MCF 10A (cell line): ENCODE measurements at regions of chr12 and their contacts with region 1.

Region 1: DNA sequence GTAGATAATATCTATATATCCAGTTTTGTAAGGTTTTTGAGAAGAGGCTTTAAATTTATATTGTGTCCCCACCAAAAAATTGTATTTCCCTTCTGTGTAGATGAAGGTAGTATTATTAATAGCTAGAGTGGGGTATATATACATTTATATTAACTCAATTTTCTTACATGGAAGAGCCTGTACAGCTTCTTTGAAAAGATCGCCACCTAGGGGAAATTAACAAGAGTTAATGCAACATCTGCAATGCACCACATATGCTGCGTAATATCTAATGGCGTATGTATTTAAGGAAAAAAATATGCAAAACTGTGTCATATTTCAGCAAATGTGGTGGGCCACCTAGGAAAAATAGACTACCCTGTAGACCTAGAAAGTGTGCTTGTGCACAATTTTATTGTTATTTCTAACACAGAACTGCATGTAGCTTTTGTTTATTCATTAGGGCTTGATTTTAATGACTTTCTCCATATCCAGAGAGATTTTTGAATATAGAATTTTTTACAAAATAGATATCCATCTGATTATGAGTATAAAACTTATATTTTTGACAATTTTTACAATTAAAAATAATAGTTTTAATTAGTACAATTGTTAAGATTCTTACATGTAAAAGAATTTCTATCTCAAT is 14.0 kb downstream of the CCER1 start:
- DNase-seq: peak; percentile 68
- H3K4me3 Mint-ChIP-seq: no peak overlapping the region
- H3K27ac Mint-ChIP-seq: no peak overlapping the region
- H3K4me1 Mint-ChIP-seq: peaks cover 6% of the 10 kb centered on the region
- H3K27me3 Mint-ChIP-seq: no peaks in the 10 kb centered on the region
- CTCF ChIP-seq: peak; percentile 68

Region 2: DNA sequence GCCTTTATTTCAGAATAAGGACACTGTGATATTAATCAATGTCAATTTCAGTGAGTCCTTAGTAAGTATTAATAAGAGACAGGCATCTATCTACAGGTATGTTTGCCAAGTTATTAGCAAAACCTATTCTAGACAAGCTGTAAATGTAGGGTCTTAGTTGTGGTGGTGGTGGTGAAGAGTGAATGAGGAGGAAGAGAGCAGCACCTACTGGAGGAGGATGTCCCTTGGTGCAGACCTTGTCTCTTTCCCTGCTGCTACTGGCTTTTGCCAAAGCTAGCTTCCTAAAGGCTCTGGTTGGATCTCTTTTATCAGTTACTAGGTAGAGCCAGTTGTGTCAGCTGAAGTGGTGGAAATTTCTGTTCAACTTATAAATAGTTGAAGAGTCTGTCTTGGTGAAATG is 927.6 kb before region 1 on chr12:
- CTCF ChIA-PET with region 1: interaction called, 3 read pairs
- POLR2A ChIA-PET with region 1: no interaction called
- intact Hi-C with region 1: loop called (anchors 5 kb)
- DNase-seq: no peak
- H3K4me3 Mint-ChIP-seq: no peak overlapping the region
- H3K27ac Mint-ChIP-seq: no peak overlapping the region
- H3K4me1 Mint-ChIP-seq: peaks cover 9% of the 10 kb centered on the region
- H3K27me3 Mint-ChIP-seq: no peaks in the 10 kb centered on the region
- CTCF ChIP-seq: no peak

Region 3: GRCh38 chr12:90773491-90773890 is 167.5 kb before region 1 on chr12:
- CTCF ChIA-PET with region 1: no interaction called
- POLR2A ChIA-PET with region 1: no interaction called
- intact Hi-C with region 1: no loop called
- DNase-seq: no peak
- H3K4me3 Mint-ChIP-seq: no peak overlapping the region
- H3K27ac Mint-ChIP-seq: no peak overlapping the region
- H3K4me1 Mint-ChIP-seq: no peaks in the 10 kb centered on the region
- H3K27me3 Mint-ChIP-seq: no peaks in the 10 kb centered on the region
- CTCF ChIP-seq: no peak

Region 4: GRCh38 chr12:90959538-90960139 is 18.7 kb after region 1 on chr12:
- CTCF ChIA-PET with region 1: interaction called, 21 read pairs
- POLR2A ChIA-PET with region 1: interaction called, 3 read pairs
- intact Hi-C with region 1: no loop called
- DNase-seq: peak; percentile 62
- H3K4me3 Mint-ChIP-seq: no peak overlapping the region
- H3K27ac Mint-ChIP-seq: no peak overlapping the region
- H3K4me1 Mint-ChIP-seq: no peaks in the 10 kb centered on the region
- H3K27me3 Mint-ChIP-seq: no peaks in the 10 kb centered on the region
- CTCF ChIP-seq: peak; percentile 48